ENCODE measurements at regions of chr11 and their contacts with region 1.

Region 1: DNA sequence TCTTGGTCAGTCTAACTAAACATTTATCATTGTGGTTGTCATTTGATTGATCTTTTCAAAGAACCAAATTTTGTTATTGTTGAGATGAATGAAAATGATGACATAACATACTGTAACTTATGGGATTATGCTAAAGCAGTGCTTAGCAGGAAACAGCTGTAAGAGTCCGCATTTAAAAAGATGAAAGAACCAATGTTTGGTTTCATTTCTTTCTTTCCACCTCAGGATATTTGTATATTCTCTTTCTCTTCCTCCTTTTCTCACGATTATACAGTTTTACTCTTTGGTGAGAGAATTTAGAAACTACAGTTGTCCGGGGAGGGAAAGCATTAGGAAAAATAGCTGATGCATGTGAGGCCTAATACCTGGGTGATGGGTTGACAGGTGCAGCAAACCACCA is 23.1 kb downstream of the PIH1D2 start:
- DNase-seq: peak; percentile 60
- H3K4me3 ChIP-seq: no peak overlapping the region
- H3K27ac ChIP-seq: peak overlapping the region; percentile 48
- H3K4me1 ChIP-seq: peaks cover 21% of the 10 kb centered on the region
- H3K27me3 ChIP-seq: no peaks in the 10 kb centered on the region
- CTCF ChIP-seq: no peak

Region 2: GRCh38 chr11:112016765-112017356 is 33.9 kb before region 1 on chr11:
- CTCF ChIA-PET with region 1: no interaction called
- POLR2A ChIA-PET with region 1: interaction called, 10 read pairs
- intact Hi-C with region 1: no loop called
- DNase-seq: peak; percentile 90
- H3K4me3 ChIP-seq: no peak overlapping the region
- H3K27ac ChIP-seq: peak overlapping the region; percentile 52
- H3K4me1 ChIP-seq: peaks cover 24% of the 10 kb centered on the region
- H3K27me3 ChIP-seq: no peaks in the 10 kb centered on the region
- CTCF ChIP-seq: no peak

Region 3: DNA sequence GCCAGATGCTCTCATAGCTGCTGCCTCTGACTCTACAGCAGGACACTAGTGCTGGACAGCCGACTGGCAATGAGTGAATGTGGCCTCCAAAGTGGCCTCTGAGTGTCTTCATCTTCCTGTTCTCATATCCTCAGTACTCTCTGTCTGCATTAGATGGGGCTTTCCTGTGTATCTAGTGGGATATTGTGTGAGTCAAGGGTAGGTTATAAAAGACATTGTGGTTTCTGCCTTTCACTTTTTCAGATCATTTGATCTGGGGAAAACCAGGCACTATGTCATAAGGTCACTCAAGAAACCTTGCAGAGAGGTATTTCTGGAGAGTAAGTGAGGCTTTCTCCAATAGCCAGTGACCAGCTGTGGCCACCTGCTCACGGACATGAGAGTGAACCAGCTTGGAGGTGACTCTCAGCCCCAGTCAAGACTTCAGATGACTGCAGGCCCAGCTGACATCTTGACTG is 576.9 kb after region 1 on chr11:
- CTCF ChIA-PET with region 1: no interaction called
- POLR2A ChIA-PET with region 1: no interaction called
- intact Hi-C with region 1: no loop called
- DNase-seq: no peak
- H3K4me3 ChIP-seq: no peak overlapping the region
- H3K27ac ChIP-seq: no peak overlapping the region
- H3K4me1 ChIP-seq: peaks cover 12% of the 10 kb centered on the region
- H3K27me3 ChIP-seq: no peaks in the 10 kb centered on the region
- CTCF ChIP-seq: no peak

Region 4: DNA sequence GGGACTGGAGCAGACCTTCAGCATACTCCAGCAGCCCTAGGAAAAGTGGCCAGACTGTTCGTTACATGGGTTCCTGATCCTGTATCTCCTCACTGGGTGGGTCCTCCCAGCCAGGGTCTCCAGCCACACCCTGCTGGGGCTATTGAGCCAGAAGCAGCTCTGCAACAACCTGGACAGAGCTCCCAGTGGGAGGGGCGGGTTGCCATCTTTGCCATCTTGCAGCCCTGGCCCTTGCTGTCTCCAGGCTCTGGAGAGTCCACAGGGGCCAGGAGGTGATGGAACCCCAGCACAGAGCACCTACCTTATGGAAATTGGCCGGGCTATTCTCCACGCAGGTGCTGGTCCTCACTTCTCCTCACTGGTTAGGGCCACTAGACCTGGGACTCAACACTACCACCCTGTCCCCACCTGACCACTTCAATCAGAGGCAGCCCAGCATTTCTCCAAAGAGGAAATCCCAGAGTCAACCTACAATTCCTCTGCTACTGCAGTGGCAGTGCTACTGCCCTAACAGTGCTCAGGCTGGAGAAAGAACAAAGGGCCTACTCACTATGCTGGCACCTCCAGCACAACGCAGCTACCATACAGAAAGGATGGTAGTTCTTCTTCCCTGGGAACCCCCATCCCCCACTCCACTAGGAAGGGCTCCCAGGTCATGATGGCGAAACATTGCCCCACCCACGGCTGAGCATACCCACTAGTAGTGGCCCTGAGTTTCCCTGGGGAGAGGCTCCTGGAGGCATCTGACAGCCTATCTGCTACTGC is 620.3 kb after region 1 on chr11:
- CTCF ChIA-PET with region 1: no interaction called
- POLR2A ChIA-PET with region 1: no interaction called
- intact Hi-C with region 1: no loop called
- DNase-seq: no peak
- H3K4me3 ChIP-seq: no peak overlapping the region
- H3K27ac ChIP-seq: no peak overlapping the region
- H3K4me1 ChIP-seq: no peaks in the 10 kb centered on the region
- H3K27me3 ChIP-seq: no peaks in the 10 kb centered on the region
- CTCF ChIP-seq: no peak